T-cell (primary cell): ENCODE measurements at regions of chr1 and their contacts with region 1.

Region 1: DNA sequence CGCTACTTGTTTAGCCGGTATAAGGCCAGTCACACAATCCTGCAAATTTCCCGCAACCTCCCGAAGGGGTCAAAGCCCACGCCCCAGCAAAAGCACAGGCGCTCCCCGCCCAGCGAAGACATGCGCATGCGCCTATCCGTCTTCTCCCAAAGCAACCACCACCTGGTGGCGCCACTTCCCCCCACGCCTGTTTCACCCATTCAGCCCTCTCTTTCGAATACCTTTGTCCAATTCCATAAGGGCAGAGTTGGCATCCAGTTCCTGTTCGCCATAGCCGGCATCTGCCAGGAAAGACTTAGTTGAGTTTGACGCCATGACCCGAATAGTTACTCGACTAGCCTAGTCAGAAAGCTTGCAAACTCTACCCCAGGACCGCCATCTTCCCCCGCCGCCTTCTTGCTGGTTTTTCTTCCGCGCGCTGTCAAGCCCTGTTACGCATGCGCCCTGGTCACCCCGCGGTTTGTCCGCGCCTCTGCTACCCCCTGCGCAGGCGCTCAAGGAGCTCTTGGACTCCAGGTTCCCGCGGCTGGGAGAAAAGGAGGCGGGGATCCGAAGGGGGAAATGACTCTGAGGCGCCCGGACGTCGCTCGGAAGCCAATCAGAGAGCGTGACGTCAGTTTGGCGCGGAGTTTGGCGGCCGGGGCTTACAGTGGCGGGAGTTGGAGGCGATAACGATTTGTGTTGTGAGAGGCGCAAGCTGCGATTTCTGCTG is at the starts of genes DTL and INTS7:
- DNase-seq: peak; percentile 94 to 99 (median 97)
- ATAC-seq: peak; percentile 89 to 90 (median 90)
- H3K4me3 ChIP-seq: peak within 1 kb of the TSS; percentile 61 to 98
- H3K4me3 Mint-ChIP-seq: peak within 1 kb of the TSS; percentile 87 to 99 (median 90)
- H3K27ac ChIP-seq: peak within 1 kb of the TSS; percentile 53
- H3K27ac Mint-ChIP-seq: peak within 1 kb of the TSS; percentile 88 to 99
- H3K4me1 ChIP-seq: peaks cover 13 to 18% of the 10 kb centered on the region in 2 experiments
- H3K4me1 Mint-ChIP-seq: peaks cover 57 to 65% (median 59%) of the 10 kb centered on the region in 3 donors
- H3K27me3 ChIP-seq: no peaks in the 10 kb centered on the region
- H3K27me3 Mint-ChIP-seq: peaks cover 0 to 6% of the 10 kb centered on the region in 2 donors
- total RNA-seq, gene DTL: 0.44 to 1.9 (median 1.2) TPM
- total RNA-seq, gene INTS7: 8.5 to 12.2 (median 8.8) TPM

Region 2: GRCh38 chr1:211698161-211699026 is 336.9 kb before region 1 on chr1:
- CTCF ChIA-PET with region 1: interaction called in 1 of 2 experiments, 23 read pairs
- POLR2A ChIA-PET with region 1: no interaction called
- DNase-seq: peak; percentile 44 to 84 (median 75)
- ATAC-seq: peak; percentile 88 to 94 (median 90)
- H3K4me3 ChIP-seq: peak overlapping the region in 1 of 2 donors; percentile 53
- H3K4me3 Mint-ChIP-seq: peak overlapping the region; percentile 56 to 65 (median 58)
- H3K27ac ChIP-seq: no peak overlapping the region
- H3K27ac Mint-ChIP-seq: no peak overlapping the region
- H3K4me1 ChIP-seq: peaks cover 5 to 45% of the 10 kb centered on the region in 2 experiments
- H3K4me1 Mint-ChIP-seq: peaks cover 19 to 50% (median 20%) of the 10 kb centered on the region in 3 donors
- H3K27me3 ChIP-seq: peaks cover 0 to 10% of the 10 kb centered on the region in 2 experiments
- H3K27me3 Mint-ChIP-seq: no peaks in the 10 kb centered on the region

Region 3: DNA sequence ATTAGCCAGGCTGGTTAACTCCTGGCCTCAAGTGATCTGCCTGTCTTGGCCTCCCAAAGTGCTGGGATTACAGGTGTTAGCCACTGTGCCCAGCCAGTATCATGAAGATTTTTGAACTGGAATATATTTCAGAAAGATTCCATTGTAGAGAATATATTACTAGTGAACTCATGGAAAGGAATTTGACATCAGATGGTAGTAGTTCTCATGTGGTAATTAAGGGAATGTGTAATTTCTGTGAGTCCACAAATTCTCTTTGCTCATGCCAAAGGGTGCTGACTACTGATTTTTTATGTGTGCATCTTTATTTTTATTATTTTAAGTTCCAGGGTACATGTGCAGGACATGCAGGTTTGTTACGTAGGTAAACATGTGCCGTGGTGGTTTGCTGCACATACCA is 10.7 kb after region 1 on chr1:
- CTCF ChIA-PET with region 1: interaction called, 5 to 12 read pairs
- POLR2A ChIA-PET with region 1: no interaction called
- DNase-seq: no peak
- ATAC-seq: no peak
- H3K4me3 ChIP-seq: no peak overlapping the region
- H3K4me3 Mint-ChIP-seq: no peak overlapping the region
- H3K27ac ChIP-seq: no peak overlapping the region
- H3K27ac Mint-ChIP-seq: no peak overlapping the region
- H3K4me1 ChIP-seq: no peaks in the 10 kb centered on the region
- H3K4me1 Mint-ChIP-seq: peaks cover under 1 to 5% (median 2%) of the 10 kb centered on the region in 3 donors
- H3K27me3 ChIP-seq: no peaks in the 10 kb centered on the region
- H3K27me3 Mint-ChIP-seq: peaks cover 0 to 1% of the 10 kb centered on the region in 2 donors

Region 4: DNA sequence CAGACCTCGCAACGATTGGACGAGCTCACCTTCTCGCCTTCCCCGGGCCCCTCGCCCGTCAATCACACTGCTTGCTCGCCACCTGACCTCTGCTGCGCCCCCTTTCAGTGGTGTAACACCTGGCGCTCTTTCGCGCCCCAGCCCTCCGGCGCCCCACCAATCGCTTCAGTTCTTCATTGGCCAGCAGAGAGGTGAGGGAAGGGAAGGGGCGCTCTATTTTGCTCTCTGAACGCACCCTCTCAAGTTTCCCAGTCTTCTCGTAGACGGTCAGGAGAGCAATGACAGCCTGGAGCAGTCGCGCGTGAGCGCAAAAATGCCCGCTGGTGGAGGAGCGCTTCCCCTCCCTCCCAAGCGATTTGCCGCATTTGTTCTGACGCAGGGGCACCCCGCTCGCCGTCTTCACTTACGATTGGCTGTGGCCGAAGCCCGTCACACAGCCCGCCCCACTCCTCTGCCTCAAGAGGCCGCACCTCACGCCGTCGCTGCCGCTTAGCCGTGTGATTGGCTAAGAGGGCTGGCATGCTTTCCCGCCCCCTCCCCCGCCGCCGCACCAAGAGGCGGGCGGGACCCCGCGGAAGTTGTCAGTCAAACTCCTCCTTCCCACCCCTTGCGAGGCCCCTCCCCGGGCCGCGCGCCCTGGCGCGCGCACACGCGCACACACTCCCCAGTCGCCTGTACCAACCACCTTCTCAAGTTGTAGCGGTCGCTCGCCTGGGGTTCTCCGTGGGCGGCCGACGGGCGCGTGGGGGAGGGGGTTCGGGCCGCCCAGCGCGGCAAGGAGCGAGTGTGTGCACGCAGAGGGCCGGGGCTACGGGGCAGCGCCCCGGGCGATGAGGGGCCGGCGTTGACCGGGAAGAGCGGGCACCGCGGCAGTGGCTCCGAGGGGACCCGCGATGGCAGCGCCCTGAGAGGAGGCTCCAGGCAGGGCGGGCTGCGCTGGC is 249.7 kb after region 1 on chr1 and contains the start of gene PPP2R5A:
- CTCF ChIA-PET with region 1: interaction called in 1 of 2 experiments, 23 read pairs
- POLR2A ChIA-PET with region 1: interaction called in 1 of 2 experiments, 3 read pairs
- DNase-seq: peak; percentile 96 to 100 (median 99)
- ATAC-seq: peak; percentile 85 to 90 (median 86)
- H3K4me3 ChIP-seq: peak within 1 kb of the TSS; percentile 97 to 99
- H3K4me3 Mint-ChIP-seq: peak within 1 kb of the TSS; percentile 95 to 99 (median 97)
- H3K27ac ChIP-seq: peak within 1 kb of the TSS; percentile 87
- H3K27ac Mint-ChIP-seq: peak within 1 kb of the TSS; percentile 96 to 97
- H3K4me1 ChIP-seq: peaks cover 22 to 30% of the 10 kb centered on the region in 2 experiments
- H3K4me1 Mint-ChIP-seq: peaks cover 37 to 56% (median 41%) of the 10 kb centered on the region in 3 donors
- H3K27me3 ChIP-seq: peaks cover 0 to 2% of the 10 kb centered on the region in 2 experiments
- H3K27me3 Mint-ChIP-seq: no peaks in the 10 kb centered on the region
- total RNA-seq, gene PPP2R5A: 40.4 to 51.1 (median 46.7) TPM